CD4-positive, alpha-beta memory T cell (primary cell): ENCODE measurements at regions of chr15 and their contacts with region 1.

Region 1: DNA sequence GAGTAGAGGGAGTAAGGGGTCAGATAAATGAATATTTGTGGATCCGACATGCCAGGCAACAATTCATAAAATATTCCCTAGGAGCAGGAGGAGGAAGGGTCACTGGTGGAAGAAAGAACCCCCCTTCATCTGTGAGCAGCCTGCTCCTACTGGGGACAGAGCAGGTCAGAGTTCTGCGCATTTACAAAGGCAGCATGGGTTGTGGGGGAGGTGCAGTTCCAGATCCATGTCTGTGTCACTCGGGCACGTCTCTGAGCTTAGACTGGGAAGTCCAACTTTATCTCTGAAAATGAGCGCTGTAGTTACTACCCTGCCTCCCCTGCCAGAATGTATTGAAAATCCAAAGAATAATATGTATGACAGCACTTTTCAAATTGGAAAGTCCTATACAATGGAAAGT is 115.2 kb downstream of the GABRG3 start:
- DNase-seq: no peak
- H3K4me3 ChIP-seq: no peak overlapping the region
- H3K4me3 Mint-ChIP-seq: no peak overlapping the region
- H3K27ac ChIP-seq: no peak overlapping the region
- H3K27ac Mint-ChIP-seq: no peak overlapping the region
- H3K4me1 ChIP-seq: no peaks in the 10 kb centered on the region
- H3K4me1 Mint-ChIP-seq: no peaks in the 10 kb centered on the region
- H3K27me3 ChIP-seq: no peaks in the 10 kb centered on the region
- H3K27me3 Mint-ChIP-seq: no peaks in the 10 kb centered on the region

Region 2: DNA sequence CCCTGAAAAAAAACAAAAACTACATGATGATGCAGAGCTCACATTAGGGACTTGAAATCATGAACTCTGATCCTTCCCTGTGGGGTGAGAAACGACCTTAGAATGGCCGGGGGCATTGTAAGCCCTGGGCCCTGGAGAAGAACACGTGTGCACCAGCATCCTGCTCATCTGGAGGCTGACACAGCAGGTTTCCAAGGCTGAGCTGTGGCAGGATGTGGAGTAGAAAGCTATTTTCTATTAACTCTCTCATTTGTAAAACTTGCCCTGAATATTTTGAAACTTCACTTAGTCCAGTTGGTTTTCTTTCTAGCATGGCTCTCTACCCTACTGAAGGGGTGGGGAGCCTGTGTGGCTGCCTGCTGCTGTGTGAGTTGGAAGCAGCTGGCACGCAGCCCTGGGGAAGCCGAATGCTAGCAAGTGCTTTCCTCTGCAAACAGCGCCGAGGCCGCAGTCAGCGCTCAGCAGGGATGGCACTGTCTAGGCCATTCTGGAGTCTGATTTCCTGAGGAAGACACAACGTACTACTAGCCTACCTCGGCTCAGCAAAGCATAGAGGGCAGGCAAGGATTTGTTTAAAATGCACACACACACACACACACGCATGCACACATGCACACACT is 57.2 kb before region 1 on chr15:
- CTCF ChIA-PET with region 1: no interaction called
- POLR2A ChIA-PET with region 1: no interaction called
- intact Hi-C with region 1: loop called (anchors 10 kb)
- DNase-seq: no peak
- H3K4me3 ChIP-seq: no peak overlapping the region
- H3K4me3 Mint-ChIP-seq: no peak overlapping the region
- H3K27ac ChIP-seq: no peak overlapping the region
- H3K27ac Mint-ChIP-seq: peak overlapping the region in 1 of 7 donors; percentile 11
- H3K4me1 ChIP-seq: no peaks in the 10 kb centered on the region
- H3K4me1 Mint-ChIP-seq: no peaks in the 10 kb centered on the region
- H3K27me3 ChIP-seq: no peaks in the 10 kb centered on the region
- H3K27me3 Mint-ChIP-seq: peaks cover 0 to 1% of the 10 kb centered on the region in 2 donors

Region 3: GRCh38 chr15:27070841-27071240 is 15.3 kb before region 1 on chr15:
- CTCF ChIA-PET with region 1: no interaction called
- POLR2A ChIA-PET with region 1: no interaction called
- intact Hi-C with region 1: no loop called
- DNase-seq: no peak
- H3K4me3 ChIP-seq: no peak overlapping the region
- H3K4me3 Mint-ChIP-seq: no peak overlapping the region
- H3K27ac ChIP-seq: no peak overlapping the region
- H3K27ac Mint-ChIP-seq: no peak overlapping the region
- H3K4me1 ChIP-seq: no peaks in the 10 kb centered on the region
- H3K4me1 Mint-ChIP-seq: no peaks in the 10 kb centered on the region
- H3K27me3 ChIP-seq: no peaks in the 10 kb centered on the region
- H3K27me3 Mint-ChIP-seq: no peaks in the 10 kb centered on the region